A549 (cell line): ENCODE measurements at regions of chr5 and their contacts with region 1.

Region 1: GRCh38 chr5:139690064-139690802 is 42.1 kb downstream of the CXXC5 start:
- DNase-seq: peak; percentile 35 to 41
- ATAC-seq: peak; percentile 52 to 69
- H3K4me3 ChIP-seq: no peak overlapping the region
- H3K27ac ChIP-seq: peak overlapping the region; percentile 20 to 69; a peak in 5 of 6 replicates
- H3K4me1 ChIP-seq: peaks cover 32% of the 10 kb centered on the region
- CTCF ChIP-seq: peak; percentile 78
- EP300 ChIP-seq: no peak
- POLR2A ChIP-seq: no peak
- RAD21 ChIP-seq: peak; percentile 79 to 80

Region 2: GRCh38 chr5:139422307-139422893 is 267.8 kb before region 1 on chr5:
- CTCF ChIA-PET with region 1: interaction called, 21 read pairs
- POLR2A ChIA-PET with region 1: no interaction called
- DNase-seq: peak; percentile 69 to 85
- ATAC-seq: peak; percentile 87 to 92
- H3K4me3 ChIP-seq: no peak overlapping the region
- H3K27ac ChIP-seq: no peak overlapping the region
- H3K4me1 ChIP-seq: no peaks in the 10 kb centered on the region
- CTCF ChIP-seq: peak; percentile 95
- EP300 ChIP-seq: no peak
- POLR2A ChIP-seq: no peak
- RAD21 ChIP-seq: peak; percentile 92 to 97

Region 3: DNA sequence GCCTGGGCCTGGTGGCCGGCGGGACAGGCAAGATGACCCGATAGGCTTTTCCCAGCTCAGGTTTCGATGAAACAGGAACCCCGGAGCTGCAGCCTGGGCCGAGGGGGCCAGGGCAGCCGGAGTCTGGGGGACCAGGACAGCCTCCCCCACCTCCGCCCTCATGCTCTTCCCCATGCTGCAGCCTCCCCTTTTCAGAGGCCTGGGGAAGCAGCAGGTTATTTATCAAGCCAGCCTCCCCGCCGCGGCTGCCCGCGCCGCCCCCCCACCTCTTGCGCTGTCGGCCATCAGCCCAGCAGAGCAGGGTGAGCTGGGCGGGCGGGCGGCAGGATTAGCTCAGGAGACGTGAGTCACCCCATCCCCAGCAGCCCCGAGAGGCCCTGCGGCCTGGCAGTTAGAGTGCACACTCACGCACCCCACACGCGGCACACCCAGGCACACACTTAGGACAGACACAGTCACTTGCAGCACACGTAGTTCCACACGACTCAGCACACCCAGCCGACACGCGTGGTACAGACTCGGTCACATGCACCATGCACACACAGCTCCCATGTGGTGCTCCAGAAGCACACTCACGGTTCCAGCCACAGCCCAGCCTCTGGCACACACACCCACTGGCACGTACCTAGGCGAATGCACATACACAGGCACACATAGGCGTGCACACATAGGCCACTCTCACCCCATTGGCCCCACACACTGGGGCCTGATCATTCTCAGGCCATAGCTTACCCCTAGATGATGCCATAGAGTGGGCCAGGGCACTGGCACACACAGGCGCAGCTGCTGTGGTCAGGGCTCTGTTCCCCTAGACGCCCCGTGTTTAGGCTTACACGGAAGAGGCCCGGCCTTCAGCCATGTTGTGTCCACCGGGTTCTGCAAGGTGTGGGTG is 29.1 kb before region 1 on chr5:
- CTCF ChIA-PET with region 1: interaction called, 12 read pairs
- POLR2A ChIA-PET with region 1: no interaction called
- DNase-seq: peak in 1 of 2 experiments; percentile 64
- ATAC-seq: peak; percentile 62 to 64
- H3K4me3 ChIP-seq: peak overlapping the region; percentile 31; the same call in 2 of the 3 replicates
- H3K27ac ChIP-seq: peak overlapping the region; percentile 87 to 98
- H3K4me1 ChIP-seq: peaks cover 84% of the 10 kb centered on the region
- CTCF ChIP-seq: no peak
- EP300 ChIP-seq: no peak
- POLR2A ChIP-seq: no peak
- RAD21 ChIP-seq: no peak

Region 4: DNA sequence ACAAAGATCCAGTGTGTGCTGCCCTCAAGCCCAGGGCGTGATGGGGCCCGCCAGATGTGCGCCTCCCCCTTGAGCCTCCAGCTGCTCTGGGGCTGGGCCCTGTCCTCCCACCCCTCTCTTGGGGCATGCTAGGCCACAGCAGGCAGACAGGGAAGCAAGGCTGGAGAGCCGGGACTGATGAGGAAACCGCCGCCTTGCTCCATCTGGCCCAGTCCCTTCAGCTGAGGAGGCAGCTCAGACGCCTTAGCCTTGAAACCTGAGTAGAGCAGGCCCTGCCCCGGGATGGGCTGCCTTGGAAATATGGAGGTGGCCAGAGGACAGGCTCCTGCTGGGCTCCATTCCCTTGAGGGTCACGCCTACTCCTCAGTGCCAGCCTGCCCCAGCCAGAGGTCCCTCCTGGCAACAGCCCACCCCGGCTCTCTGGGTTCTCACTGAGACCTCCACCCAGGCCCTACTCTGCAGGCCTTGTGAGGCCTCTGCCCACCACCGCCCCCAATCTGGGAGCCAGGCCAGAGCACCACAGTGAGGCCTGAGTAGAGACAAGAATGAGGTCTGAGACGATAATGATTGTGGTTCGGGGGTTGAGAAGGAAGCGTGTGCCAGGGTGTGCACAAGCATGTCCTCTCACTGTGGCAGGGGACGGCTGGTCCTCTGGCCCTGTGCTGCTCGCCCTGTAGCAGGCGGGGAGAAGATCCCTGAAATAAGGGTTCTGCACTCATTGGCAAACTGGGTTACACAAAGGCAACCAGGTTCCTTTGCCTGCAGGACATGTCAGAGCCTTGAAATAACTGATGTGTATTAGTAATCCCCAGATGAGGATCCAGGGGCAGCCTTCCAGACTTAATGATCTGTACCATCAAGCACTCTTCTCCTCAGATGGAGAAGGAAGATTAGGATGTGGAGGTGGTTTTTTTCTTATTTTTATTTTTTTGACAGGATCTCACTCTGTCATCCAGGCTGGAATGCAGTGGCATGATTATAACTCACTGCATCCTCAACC is 11.2 kb before region 1 on chr5:
- CTCF ChIA-PET with region 1: interaction called, 39 read pairs
- POLR2A ChIA-PET with region 1: no interaction called
- DNase-seq: no peak
- ATAC-seq: peak in 1 of 2 experiments; percentile 41; a peak in 3 of 6 replicates
- H3K4me3 ChIP-seq: no peak overlapping the region
- H3K27ac ChIP-seq: 0 out of 6 replicates have a peak overlapping the region, but pooled peaks of 1 of the 2 experiments have one; percentile 10
- H3K4me1 ChIP-seq: peaks cover 17% of the 10 kb centered on the region; the same call in 2 of the 3 replicates
- CTCF ChIP-seq: no peak
- EP300 ChIP-seq: no peak
- POLR2A ChIP-seq: no peak
- RAD21 ChIP-seq: no peak

Region 5: GRCh38 chr5:139774980-139775661 is 84.9 kb after region 1 on chr5:
- CTCF ChIA-PET with region 1: interaction called, 10 read pairs
- POLR2A ChIA-PET with region 1: no interaction called
- DNase-seq: peak; percentile 63 to 83
- ATAC-seq: peak; percentile 90 to 98
- H3K4me3 ChIP-seq: no peak overlapping the region
- H3K27ac ChIP-seq: no peak overlapping the region
- H3K4me1 ChIP-seq: no peaks in the 10 kb centered on the region
- CTCF ChIP-seq: peak; percentile 71
- EP300 ChIP-seq: no peak
- POLR2A ChIP-seq: no peak
- RAD21 ChIP-seq: peak; percentile 44 to 45; a peak in 3 of 5 replicates